Mammary epithelial cell (primary cell): ENCODE measurements at regions of chr4 and their contacts with region 1.

Region 1: GRCh38 chr4:147019061-147019460 is 73.4 kb upstream of the TTC29 start:
- DNase-seq: peak; percentile 42
- H3K4me3 ChIP-seq: no peak overlapping the region
- H3K27ac ChIP-seq: no peak overlapping the region
- H3K4me1 ChIP-seq: no peaks in the 10 kb centered on the region
- H3K27me3 ChIP-seq: peaks cover 3% of the 10 kb centered on the region
- CTCF ChIP-seq: peak; percentile 69 to 81

Region 2: GRCh38 chr4:146930673-146931072 is 88.4 kb before region 1 on chr4:
- CTCF ChIA-PET with region 1: interaction called, 17 read pairs
- dilution Hi-C with region 1: no loop called
- in situ Hi-C with region 1: no loop called
- intact Hi-C with region 1: no loop called
- DNase-seq: no peak
- H3K4me3 ChIP-seq: no peak overlapping the region
- H3K27ac ChIP-seq: no peak overlapping the region
- H3K4me1 ChIP-seq: no peaks in the 10 kb centered on the region
- H3K27me3 ChIP-seq: no peaks in the 10 kb centered on the region
- CTCF ChIP-seq: no peak

Region 3: DNA sequence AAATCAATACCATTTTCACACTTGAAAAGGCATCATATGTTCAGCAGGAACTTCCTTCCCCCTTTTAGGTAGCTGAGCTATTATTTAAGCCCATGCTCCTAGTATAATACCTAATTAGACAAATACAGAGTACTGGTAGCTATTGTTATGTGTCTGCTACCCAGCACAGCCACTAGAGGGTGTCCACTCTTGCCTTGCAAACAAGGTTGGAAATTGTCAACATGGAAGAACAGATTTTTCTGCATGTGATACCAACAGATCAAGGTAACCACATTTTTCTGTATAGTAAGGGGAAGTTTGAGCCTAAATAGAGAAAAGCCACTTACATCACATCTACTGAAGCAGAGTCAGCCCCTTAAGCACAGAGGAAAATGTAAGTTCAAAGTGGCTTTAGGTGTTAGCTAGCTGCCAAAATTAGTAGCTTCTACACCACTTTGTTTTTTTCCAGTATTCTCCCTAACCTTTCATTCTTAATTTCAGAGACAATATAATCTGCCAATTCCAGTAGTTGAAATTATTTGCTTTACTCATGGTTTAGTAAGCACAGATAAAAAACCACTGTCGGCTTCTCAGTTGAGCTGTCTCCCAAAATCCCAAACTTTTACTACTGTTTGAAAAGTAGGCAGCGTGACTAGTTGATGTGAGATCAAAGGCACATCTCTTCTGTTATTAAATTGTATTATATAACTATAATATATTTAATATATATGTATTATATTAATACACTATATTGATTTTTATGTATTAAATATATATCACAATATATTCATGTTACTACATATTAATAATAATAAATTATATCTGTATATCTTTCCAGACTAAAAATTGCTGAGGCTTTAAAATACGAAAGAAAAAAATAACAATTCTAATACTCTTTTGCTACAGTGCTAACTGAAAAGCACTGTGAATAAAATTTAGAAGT is 500.0 kb after region 1 on chr4:
- CTCF ChIA-PET with region 1: no interaction called
- dilution Hi-C with region 1: no loop called
- in situ Hi-C with region 1: no loop called
- intact Hi-C with region 1: loop called (anchors 2 kb)
- DNase-seq: peak; percentile 60
- H3K4me3 ChIP-seq: no peak overlapping the region
- H3K27ac ChIP-seq: no peak overlapping the region
- H3K4me1 ChIP-seq: peaks cover 5% of the 10 kb centered on the region
- H3K27me3 ChIP-seq: no peaks in the 10 kb centered on the region
- CTCF ChIP-seq: peak; percentile 96 to 97